Psoas muscle (tissue), 8 donors: ENCODE measurements at regions of chr6 and their contacts with region 1.

Region 1: GRCh38 chr6:70566751-70567382 is at the start of gene SDHAF4:
- DNase-seq: peak; percentile 95 to 97
- ATAC-seq: peak; percentile 98 to 100 (median 99)
- H3K4me3 ChIP-seq: peak within 1 kb of the TSS; percentile 82
- H3K27ac ChIP-seq: peak within 1 kb of the TSS; percentile 88
- H3K4me1 ChIP-seq: no peaks in the 10 kb centered on the region
- H3K27me3 ChIP-seq: no peaks in the 10 kb centered on the region
- CTCF ChIP-seq: no peak
- total RNA-seq, gene SDHAF4: 8.3 to 11.4 (median 9.1) TPM

Region 2: GRCh38 chr6:69796642-69797390 is 770.1 kb before region 1 on chr6 and contains the start of gene LMBRD1:
- intact Hi-C with region 1: loop called in 1 of 2 experiments (anchors 10 kb)
- DNase-seq: peak; percentile 98
- ATAC-seq: peak; percentile 96 to 99 (median 96)
- H3K4me3 ChIP-seq: peak within 1 kb of the TSS; percentile 79
- H3K27ac ChIP-seq: peak within 1 kb of the TSS; percentile 94
- H3K4me1 ChIP-seq: peaks cover 20% of the 10 kb centered on the region
- H3K27me3 ChIP-seq: no peaks in the 10 kb centered on the region
- CTCF ChIP-seq: peak; percentile 70
- total RNA-seq, gene LMBRD1: 22.9 to 37.0 (median 27.3) TPM

Region 3: GRCh38 chr6:70336996-70337742 is 229.7 kb before region 1 on chr6:
- intact Hi-C with region 1: no loop called
- DNase-seq: no peak
- ATAC-seq: no peak
- H3K4me3 ChIP-seq: no peak overlapping the region
- H3K27ac ChIP-seq: no peak overlapping the region
- H3K4me1 ChIP-seq: no peaks in the 10 kb centered on the region
- H3K27me3 ChIP-seq: no peaks in the 10 kb centered on the region
- CTCF ChIP-seq: no peak

Region 4: DNA sequence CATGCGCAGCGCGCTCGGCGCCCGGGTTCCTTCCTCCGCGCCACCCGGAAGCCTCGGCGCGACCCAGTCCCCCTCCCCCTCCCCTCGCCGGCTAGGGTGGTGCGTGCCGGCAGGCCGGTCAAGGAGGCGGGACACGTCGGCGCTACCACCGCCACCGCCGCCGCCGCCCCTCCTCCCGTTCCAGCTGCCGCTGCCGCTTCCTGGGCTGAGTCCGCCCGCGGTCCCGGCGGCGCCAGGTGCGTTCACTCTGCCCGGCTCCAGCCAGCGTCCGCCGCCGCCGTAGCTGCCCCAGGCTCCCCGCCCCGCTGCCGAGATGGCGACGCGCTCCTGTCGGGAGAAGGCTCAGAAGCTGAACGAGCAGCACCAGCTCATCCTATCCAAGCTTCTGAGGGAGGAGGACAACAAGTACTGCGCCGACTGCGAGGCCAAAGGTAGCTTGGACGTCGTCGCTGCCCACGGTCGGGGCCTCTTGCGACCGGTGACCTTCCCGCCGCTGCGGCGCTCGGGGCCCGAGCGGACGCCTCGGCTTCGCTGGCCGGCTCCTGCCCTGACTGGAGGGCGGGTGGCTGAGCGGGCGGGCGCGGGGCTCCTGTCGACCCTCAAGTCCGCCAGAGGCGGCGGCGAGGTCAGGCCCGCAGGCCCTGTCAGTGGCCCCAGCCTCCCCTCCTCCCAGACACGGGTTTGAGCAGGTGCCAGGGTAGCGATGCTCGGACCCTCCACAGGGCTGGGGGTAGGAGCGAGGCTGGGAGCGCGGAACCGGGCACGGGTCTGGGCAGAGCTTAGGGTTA is 101.0 kb after region 1 on chr6 and contains the start of gene SMAP1:
- intact Hi-C with region 1: loop called (anchors 5 kb)
- DNase-seq: peak; percentile 97 to 98
- ATAC-seq: peak; percentile 90 to 95 (median 92)
- H3K4me3 ChIP-seq: peak within 1 kb of the TSS; percentile 89
- H3K27ac ChIP-seq: peak within 1 kb of the TSS; percentile 95
- H3K4me1 ChIP-seq: peaks cover 56% of the 10 kb centered on the region
- H3K27me3 ChIP-seq: no peaks in the 10 kb centered on the region
- CTCF ChIP-seq: no peak
- total RNA-seq, gene SMAP1: 24.0 to 40.2 (median 29.8) TPM

Region 5: GRCh38 chr6:70686548-70687133 is 119.8 kb after region 1 on chr6:
- intact Hi-C with region 1: loop called in 1 of 2 experiments (anchors 5 kb)
- DNase-seq: no peak
- ATAC-seq: peak in 3 of 4 donors; percentile 53 to 62 (median 57)
- H3K4me3 ChIP-seq: no peak overlapping the region
- H3K27ac ChIP-seq: no peak overlapping the region
- H3K4me1 ChIP-seq: peaks cover 35% of the 10 kb centered on the region
- H3K27me3 ChIP-seq: no peaks in the 10 kb centered on the region
- CTCF ChIP-seq: peak; percentile 80